PC-9 (cell line): ENCODE measurements at regions of chr7 and their contacts with region 1.

Region 1: GRCh38 chr7:130210181-130210935 is 2.7 kb downstream of the SSMEM1 start:
- DNase-seq: peak in 1 of 2 experiments; percentile 46
- H3K4me3 ChIP-seq: no peak overlapping the region
- H3K27ac ChIP-seq: no peak overlapping the region
- H3K4me1 ChIP-seq: peaks cover 19% of the 10 kb centered on the region
- H3K27me3 ChIP-seq: no peaks in the 10 kb centered on the region
- CTCF ChIP-seq: no peak

Region 2: GRCh38 chr7:130920122-130920521 is 709.8 kb after region 1 on chr7:
- CTCF ChIA-PET with region 1: interaction called, 19 read pairs
- POLR2A ChIA-PET with region 1: no interaction called
- intact Hi-C with region 1: no loop called
- DNase-seq: no peak
- H3K4me3 ChIP-seq: no peak overlapping the region
- H3K27ac ChIP-seq: peak overlapping the region; percentile 99
- H3K4me1 ChIP-seq: peaks cover 62% of the 10 kb centered on the region
- H3K27me3 ChIP-seq: no peaks in the 10 kb centered on the region
- CTCF ChIP-seq: no peak